ENCODE measurements at regions of chr9 and their contacts with region 1.

Region 1: GRCh38 chr9:21102305-21102704 is 24.6 kb upstream of the IFNB1 start:
- DNase-seq: no peak
- ATAC-seq: no peak

Region 2: GRCh38 chr9:20962536-20963225 is 139.6 kb before region 1 on chr9:
- intact Hi-C with region 1: loop called in 1 of 2 experiments (anchors 10 kb)
- DNase-seq: no peak
- ATAC-seq: no peak